WTC11 (cell line): ENCODE measurements at regions of chr4 and their contacts with region 1.

Region 1: GRCh38 chr4:4775493-4776004 is 83.9 kb upstream of the MSX1 start:
- DNase-seq: no peak
- ATAC-seq: no peak
- H3K4me3 Mint-ChIP-seq: no peak overlapping the region
- H3K27ac Mint-ChIP-seq: no peak overlapping the region
- H3K4me1 Mint-ChIP-seq: no peaks in the 10 kb centered on the region
- H3K27me3 Mint-ChIP-seq: peaks cover 9% of the 10 kb centered on the region
- CTCF ChIP-seq: no peak

Region 2: DNA sequence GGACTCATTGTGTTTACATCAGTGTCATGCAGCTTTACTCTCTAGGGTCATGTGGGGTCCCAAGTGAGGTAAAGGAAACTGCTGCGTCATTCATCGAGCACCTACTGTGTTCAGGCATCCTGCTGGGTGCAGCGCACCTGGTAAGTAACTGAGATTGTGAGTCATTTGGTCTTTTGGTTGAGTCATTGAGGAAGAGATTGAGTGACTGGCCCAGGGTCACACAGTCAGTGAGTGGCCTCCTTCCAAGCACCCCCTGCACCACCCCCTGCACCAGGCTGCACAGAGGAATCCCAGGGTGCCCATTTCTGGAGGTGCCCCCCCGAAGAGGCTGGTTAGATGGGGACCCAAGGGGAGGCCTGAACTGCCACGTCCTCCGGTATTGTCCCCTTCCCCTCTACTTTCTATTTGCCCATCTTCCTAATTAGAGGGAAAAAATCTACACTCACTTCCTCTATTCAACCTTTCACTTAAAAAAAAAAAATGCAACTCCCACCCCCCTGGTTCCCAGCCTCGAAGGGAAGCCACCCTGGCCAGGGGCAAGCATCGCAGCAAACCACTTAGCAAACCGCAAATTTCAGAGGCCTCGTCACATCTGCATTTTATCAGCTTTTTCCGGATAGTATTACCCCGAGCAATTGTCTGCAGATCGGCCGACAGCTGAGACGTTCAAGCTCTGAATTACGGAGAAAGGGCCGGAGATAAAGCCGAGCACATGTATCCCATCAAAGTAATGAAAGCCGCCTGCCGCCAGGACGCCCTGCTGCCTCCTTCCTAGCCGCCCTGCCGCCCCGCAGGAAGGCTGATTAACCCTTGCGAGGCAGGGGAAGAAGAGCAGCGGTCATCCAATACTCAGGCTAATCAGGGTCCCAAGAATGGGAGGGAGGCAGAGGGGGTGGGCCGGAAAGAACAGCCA is 12.4 kb before region 1 on chr4:
- CTCF ChIA-PET with region 1: interaction called, 23 read pairs
- POLR2A ChIA-PET with region 1: no interaction called
- DNase-seq: peak; percentile 38
- ATAC-seq: peak; percentile 37
- H3K4me3 Mint-ChIP-seq: peak overlapping the region; percentile 50
- H3K27ac Mint-ChIP-seq: 0 out of 2 replicates have a peak overlapping the region, but pooled peaks have one; percentile 40
- H3K4me1 Mint-ChIP-seq: peaks cover 61% of the 10 kb centered on the region
- H3K27me3 Mint-ChIP-seq: peaks cover 23% of the 10 kb centered on the region
- CTCF ChIP-seq: no peak

Region 3: GRCh38 chr4:4791299-4792111 is 16.0 kb after region 1 on chr4:
- CTCF ChIA-PET with region 1: no interaction called
- POLR2A ChIA-PET with region 1: no interaction called
- DNase-seq: peak; percentile 31
- ATAC-seq: peak; percentile 95
- H3K4me3 Mint-ChIP-seq: no peak overlapping the region
- H3K27ac Mint-ChIP-seq: no peak overlapping the region
- H3K4me1 Mint-ChIP-seq: peaks cover 10% of the 10 kb centered on the region
- H3K27me3 Mint-ChIP-seq: peaks cover 31% of the 10 kb centered on the region
- CTCF ChIP-seq: no peak

Region 4: DNA sequence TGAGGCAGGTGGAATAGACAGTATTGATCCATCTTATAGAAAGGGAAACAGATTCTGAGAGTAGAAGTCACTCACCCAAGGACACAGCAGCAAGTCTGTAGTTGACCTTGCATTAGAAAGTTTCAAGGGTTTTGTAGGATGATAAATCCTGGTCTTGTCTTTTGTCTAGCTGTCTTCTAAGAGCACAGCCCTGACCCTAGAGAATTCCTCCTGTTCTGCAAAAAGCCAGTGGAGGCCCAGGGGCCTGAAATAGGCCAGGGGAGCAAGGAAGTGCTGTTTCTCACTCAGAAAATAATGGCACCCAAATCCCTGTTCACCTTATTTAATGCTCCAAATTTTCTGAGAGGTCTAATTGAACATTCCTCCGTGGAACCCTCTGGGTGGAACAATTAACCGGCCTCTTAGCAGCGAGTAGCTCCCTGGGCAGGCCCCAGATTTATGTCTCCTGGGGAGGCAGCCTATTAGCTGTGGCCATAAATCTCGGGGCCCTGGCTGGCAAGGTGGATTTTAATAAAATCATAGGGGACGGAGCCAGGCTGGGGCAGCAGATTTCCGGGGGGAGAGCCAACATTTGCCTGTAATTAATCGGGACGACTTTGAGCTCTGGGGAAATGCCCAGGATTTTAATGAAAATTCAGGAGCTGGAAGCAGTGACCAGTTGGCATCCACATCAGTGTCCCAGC is 34.7 kb after region 1 on chr4:
- CTCF ChIA-PET with region 1: no interaction called
- POLR2A ChIA-PET with region 1: no interaction called
- DNase-seq: no peak
- ATAC-seq: no peak
- H3K4me3 Mint-ChIP-seq: no peak overlapping the region
- H3K27ac Mint-ChIP-seq: no peak overlapping the region
- H3K4me1 Mint-ChIP-seq: peaks cover 4% of the 10 kb centered on the region
- H3K27me3 Mint-ChIP-seq: peaks cover 49% of the 10 kb centered on the region
- CTCF ChIP-seq: no peak